MCF 10A (cell line): ENCODE measurements at regions of chr18 and their contacts with region 1.

Region 1: GRCh38 chr18:50231621-50232020 is 34.7 kb downstream of the CFAP53 start:
- DNase-seq: peak; percentile 58
- H3K4me3 Mint-ChIP-seq: no peak overlapping the region
- H3K27ac Mint-ChIP-seq: peak overlapping the region; percentile 17
- H3K4me1 Mint-ChIP-seq: peaks cover 14% of the 10 kb centered on the region
- H3K27me3 Mint-ChIP-seq: no peaks in the 10 kb centered on the region
- CTCF ChIP-seq: no peak

Region 2: DNA sequence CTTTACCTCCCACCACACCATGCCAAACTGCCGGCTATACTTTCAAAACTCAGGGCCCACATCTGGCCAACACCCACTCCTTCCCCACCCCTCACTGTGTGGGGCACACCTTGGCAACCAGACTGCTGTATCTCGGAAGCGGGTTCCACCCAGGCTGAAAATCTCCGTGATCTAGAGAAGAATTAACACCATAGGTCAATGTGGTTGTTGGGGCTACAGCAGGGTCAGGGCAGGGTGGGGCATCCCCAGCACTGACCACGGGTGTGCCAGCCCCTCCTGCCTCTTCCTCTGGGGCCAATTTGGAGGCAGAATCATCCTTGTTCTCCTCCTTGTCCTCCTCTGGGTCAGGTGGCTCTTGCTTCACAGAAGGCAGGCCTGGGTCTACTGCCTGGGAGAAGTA is 40.9 kb after region 1 on chr18:
- CTCF ChIA-PET with region 1: no interaction called
- POLR2A ChIA-PET with region 1: no interaction called
- intact Hi-C with region 1: no loop called
- DNase-seq: no peak
- H3K4me3 Mint-ChIP-seq: no peak overlapping the region
- H3K27ac Mint-ChIP-seq: peak overlapping the region; percentile 35
- H3K4me1 Mint-ChIP-seq: peaks cover 7% of the 10 kb centered on the region
- H3K27me3 Mint-ChIP-seq: no peaks in the 10 kb centered on the region
- CTCF ChIP-seq: no peak

Region 3: DNA sequence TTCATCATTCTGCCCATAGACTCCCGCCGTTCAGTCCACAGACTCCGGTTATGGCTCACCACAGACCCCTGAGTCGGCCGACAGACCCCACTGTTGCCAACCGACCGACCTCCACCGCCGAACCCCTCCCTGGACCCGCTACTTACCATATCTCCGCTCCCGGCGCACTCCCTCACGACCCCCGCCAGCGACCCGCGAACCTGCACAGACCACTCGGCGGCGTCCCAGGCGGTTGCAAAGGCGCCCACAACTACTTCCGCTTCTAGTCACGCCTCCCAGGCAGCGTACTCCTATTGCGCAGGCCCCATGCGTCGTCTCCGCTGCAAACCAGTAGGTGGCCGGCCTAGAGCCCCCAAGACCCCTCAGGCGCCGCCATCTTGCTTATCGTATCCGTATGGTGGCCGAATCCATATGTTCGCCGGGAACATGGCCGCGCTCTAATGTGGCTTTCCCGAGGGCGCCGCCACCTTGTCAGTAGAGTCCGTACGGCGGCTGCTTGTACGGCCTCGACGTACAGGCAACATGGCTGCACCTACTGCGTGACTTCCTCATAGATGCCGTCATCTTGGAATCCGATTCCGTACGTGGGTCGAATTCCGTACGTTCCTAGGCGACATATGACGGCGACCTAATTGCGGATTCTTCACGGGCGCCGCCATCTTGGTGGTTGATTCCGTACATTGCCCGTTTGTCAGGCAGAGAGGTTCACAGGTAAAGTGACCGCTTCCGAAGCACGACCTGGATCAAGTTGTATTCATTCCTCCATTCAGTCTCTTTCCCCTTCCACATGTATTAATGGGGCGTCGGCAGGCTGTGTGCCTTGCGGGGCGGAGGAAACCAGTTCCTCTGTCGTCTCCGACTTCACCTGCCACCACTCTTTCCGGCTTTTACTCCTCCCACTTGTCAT is 56.1 kb after region 1 on chr18 and contains the start of gene CXXC1:
- CTCF ChIA-PET with region 1: interaction called, 3 read pairs
- POLR2A ChIA-PET with region 1: no interaction called
- intact Hi-C with region 1: loop called (anchors 2 kb)
- DNase-seq: peak; percentile 99
- H3K4me3 Mint-ChIP-seq: peak within 1 kb of the TSS; percentile 86
- H3K27ac Mint-ChIP-seq: peak within 1 kb of the TSS; percentile 90
- H3K4me1 Mint-ChIP-seq: peaks cover 33% of the 10 kb centered on the region
- H3K27me3 Mint-ChIP-seq: no peaks in the 10 kb centered on the region
- CTCF ChIP-seq: peak; percentile 30
- total RNA-seq, gene CXXC1: 65.1 and 85.4 TPM in 2 replicates

Region 4: GRCh38 chr18:50419131-50419530 is 187.5 kb after region 1 on chr18:
- CTCF ChIA-PET with region 1: no interaction called
- POLR2A ChIA-PET with region 1: no interaction called
- intact Hi-C with region 1: no loop called
- DNase-seq: no peak
- H3K4me3 Mint-ChIP-seq: no peak overlapping the region
- H3K27ac Mint-ChIP-seq: no peak overlapping the region
- H3K4me1 Mint-ChIP-seq: no peaks in the 10 kb centered on the region
- H3K27me3 Mint-ChIP-seq: no peaks in the 10 kb centered on the region
- CTCF ChIP-seq: no peak